HAP-1 (cell line): ENCODE measurements at regions of chr7 and their contacts with region 1.

Region 1: DNA sequence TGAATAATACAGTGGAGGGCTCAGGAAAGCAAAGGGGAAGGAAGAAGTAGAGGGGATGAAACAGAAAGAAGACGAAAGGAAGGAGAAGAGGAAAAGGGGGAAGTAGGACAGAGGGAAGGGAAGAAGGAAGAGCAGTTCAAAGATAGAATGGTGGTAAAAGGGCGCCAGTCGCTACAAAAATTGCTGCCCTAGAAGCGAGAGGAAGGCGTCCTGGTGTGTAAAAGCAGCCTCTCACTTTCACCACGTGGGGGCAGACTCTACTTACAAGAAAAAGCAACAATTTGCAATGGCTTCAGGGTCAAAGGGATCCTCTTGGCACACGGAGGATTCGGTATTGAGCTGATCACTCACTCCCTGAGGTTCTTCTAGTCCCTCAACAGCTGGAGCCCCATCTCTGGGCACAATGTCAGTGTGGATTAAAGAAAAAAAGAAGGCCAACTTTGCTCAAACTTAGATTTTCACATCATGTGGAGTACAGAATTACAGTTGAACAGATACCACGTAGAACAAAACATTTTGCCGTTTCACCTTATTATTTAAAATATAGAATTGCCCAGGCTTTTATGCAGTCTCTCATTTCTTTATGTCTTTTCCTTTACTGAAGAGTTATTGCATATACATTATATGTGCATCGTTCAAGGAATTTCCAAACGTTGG is 31.4 kb upstream of the NPVF start:
- DNase-seq: peak; percentile 82
- H3K4me3 ChIP-seq: no peak overlapping the region
- H3K4me1 ChIP-seq: peaks cover 4% of the 10 kb centered on the region
- H3K27me3 ChIP-seq: peaks cover under 1% of the 10 kb centered on the region; the same call in 1 of the 2 replicates

Region 2: GRCh38 chr7:25389489-25390106 is 129.9 kb after region 1 on chr7:
- in situ Hi-C with region 1: loop called (anchors 5 kb)
- DNase-seq: peak; percentile 37 to 50
- H3K4me3 ChIP-seq: no peak overlapping the region
- H3K4me1 ChIP-seq: no peaks in the 10 kb centered on the region
- H3K27me3 ChIP-seq: peaks cover 4% of the 10 kb centered on the region

Region 3: GRCh38 chr7:25559581-25560367 is 300.1 kb after region 1 on chr7:
- in situ Hi-C with region 1: loop called (anchors 5 kb)
- DNase-seq: no peak
- H3K4me3 ChIP-seq: no peak overlapping the region
- H3K4me1 ChIP-seq: peaks cover 37% of the 10 kb centered on the region
- H3K27me3 ChIP-seq: no peaks in the 10 kb centered on the region